MCF 10A (cell line): ENCODE measurements at regions of chr1 and their contacts with region 1.

Region 1: GRCh38 chr1:157170677-157171515 is 32.7 kb upstream of the ETV3 start:
- DNase-seq: peak; percentile 57
- H3K4me3 Mint-ChIP-seq: no peak overlapping the region
- H3K27ac Mint-ChIP-seq: no peak overlapping the region
- H3K4me1 Mint-ChIP-seq: no peaks in the 10 kb centered on the region
- H3K27me3 Mint-ChIP-seq: peaks cover 56% of the 10 kb centered on the region
- CTCF ChIP-seq: peak; percentile 49

Region 2: GRCh38 chr1:157142765-157143423 is 28.0 kb before region 1 on chr1:
- CTCF ChIA-PET with region 1: no interaction called
- POLR2A ChIA-PET with region 1: no interaction called
- intact Hi-C with region 1: no loop called
- DNase-seq: no peak
- H3K4me3 Mint-ChIP-seq: no peak overlapping the region
- H3K27ac Mint-ChIP-seq: no peak overlapping the region
- H3K4me1 Mint-ChIP-seq: peaks cover 8% of the 10 kb centered on the region
- H3K27me3 Mint-ChIP-seq: no peaks in the 10 kb centered on the region
- CTCF ChIP-seq: no peak

Region 3: GRCh38 chr1:157181790-157182189 is 10.9 kb after region 1 on chr1:
- CTCF ChIA-PET with region 1: interaction called, 64 read pairs
- POLR2A ChIA-PET with region 1: no interaction called
- intact Hi-C with region 1: no loop called
- DNase-seq: no peak
- H3K4me3 Mint-ChIP-seq: no peak overlapping the region
- H3K27ac Mint-ChIP-seq: no peak overlapping the region
- H3K4me1 Mint-ChIP-seq: no peaks in the 10 kb centered on the region
- H3K27me3 Mint-ChIP-seq: peaks cover 63% of the 10 kb centered on the region
- CTCF ChIP-seq: no peak